GM13977 (cell line): ENCODE measurements at regions of chr4 and their contacts with region 1.

Region 1: DNA sequence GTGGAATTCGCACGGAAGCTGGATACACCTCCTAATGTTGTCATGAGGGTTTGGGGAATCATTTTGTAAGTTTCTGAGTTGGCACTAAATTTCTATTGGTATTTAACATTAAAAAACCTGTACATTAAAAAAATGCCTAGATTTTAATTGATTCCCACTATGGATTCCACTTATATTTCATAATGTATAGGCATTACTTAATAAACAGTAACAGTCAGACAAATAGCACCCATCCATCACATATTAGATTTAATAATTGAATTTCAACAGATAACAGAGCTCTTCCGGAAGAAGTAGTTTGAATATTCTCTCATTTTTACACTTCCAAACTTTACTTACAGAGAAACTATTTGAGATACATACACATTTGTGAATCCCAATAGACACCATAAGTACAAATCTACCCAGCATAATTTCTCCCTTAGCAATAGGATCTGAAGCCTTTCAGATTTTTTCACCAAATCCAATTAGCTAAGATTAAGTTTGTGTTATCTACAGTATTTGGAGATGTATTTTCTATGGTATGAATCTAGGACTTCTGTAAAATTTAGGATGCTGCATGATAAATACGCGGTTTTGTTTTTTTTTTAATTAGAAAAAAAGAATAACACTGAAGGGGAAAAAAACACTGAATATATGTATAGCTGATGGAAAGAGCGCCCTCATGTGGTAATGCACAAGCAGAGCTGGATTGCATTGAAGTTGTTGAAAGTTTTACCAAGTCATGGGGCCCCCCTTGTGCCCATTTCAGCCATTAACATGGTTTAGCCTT is 12.2 kb upstream of the ODAM start:
- DNase-seq: peak; percentile 14
- CTCF ChIP-seq: peak; percentile 79

Region 2: GRCh38 chr4:69689599-69689998 is 493.8 kb before region 1 on chr4:
- in situ Hi-C with region 1: loop called (anchors 25 kb)
- DNase-seq: peak; percentile 9
- CTCF ChIP-seq: peak; percentile 55

Region 3: DNA sequence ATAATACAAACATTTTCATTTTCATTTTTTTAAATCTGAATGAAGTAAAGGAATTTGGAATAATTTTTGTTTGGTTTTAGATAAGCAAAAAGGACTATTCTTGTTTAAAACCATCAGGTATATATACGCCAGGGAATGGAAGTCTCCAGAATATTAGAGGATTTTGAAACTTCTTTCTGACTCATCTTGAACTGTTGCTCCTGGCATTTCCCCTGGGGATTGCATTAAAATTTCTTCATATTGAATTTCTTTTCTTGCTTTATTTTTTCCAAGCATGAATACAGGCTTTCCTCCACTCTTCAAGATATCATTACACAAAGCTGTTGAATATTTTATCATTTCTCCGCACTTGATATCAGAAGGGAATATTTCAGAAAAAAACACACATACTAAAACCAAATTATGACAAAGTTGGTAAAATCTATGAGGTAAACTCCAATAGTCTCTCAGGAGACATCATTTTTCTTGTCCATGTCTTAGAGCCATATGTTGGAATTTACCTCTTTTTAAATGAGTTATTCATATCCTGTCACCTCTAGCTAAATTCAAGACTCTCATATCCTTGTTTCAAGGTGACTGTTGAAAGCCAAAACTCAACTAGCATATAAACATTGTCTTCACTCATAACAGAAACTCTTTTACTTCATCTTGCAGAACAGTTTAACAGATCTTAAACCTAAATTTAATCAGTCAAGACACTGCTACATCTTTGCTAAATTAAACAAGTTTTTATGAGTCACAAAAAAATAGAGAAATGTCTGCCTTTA is 273.2 kb before region 1 on chr4:
- in situ Hi-C with region 1: loop called (anchors 25 kb)
- DNase-seq: peak; percentile 17
- CTCF ChIP-seq: no peak